Left colon (tissue), 2 donors: ENCODE measurements at regions of chr13 and their contacts with region 1.

Region 1: DNA sequence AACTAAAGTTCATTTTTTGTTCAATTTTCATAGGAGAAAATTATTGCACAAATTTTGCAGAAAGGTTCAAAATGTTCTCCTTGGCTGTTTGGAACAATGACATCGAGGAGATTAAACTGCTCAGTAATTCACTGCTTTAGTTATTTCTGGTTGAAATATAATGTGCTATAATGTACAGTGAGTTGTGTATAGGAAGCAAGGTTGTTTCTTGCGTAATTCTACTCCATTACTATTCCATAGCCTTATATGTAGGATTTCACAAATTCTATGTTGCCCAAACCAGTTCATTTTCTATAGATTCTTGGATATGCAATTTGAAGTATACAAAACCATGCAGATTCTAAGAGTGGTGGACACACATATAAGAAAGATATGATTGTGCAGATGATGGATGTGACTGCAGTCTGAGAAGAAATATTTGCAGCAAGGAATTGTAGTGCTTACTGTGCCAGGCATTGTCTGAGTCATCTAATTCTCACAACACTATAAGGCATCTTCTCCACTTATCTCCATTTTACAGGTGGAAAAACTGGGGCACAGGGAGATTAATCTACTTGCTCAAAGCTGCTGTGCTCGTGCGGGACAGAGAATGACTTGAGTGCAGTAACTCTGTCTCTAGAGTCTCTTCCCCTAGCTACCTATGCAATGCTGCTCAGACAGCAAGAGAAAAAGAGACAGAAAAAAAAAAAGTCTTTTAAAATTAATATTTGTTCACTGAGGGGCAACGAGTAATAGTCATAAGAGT is 515.5 kb downstream of the MYO16 start:
- DNase-seq: no peak
- ATAC-seq: no peak

Region 2: DNA sequence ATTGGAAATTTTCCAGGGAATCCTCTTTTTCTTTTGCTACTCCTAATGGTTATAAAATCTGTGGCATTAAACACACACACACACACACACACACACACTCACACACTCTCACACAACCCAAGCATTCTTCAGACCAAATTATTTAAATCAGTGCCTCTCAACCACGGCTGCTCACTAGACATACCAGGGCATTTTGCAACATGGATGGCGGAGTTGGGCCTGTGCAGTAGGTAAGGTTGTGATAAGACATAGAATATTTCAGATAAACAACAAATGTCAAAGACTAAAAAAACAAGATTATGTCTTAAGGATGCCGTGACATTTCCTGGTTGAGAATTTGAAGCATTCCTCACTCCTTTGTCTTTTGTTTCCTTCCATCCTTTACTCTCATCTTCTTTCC is 72.4 kb before region 1 on chr13:
- intact Hi-C with region 1: no loop called
- DNase-seq: no peak
- ATAC-seq: no peak

Region 3: GRCh38 chr13:109778102-109778542 is 633.3 kb after region 1 on chr13:
- intact Hi-C with region 1: loop called in 1 of 2 experiments (anchors 5 kb)
- DNase-seq: no peak
- ATAC-seq: peak; percentile 88